GM18951 (cell line): ENCODE measurements at regions of chr10 and their contacts with region 1.

Region 1: DNA sequence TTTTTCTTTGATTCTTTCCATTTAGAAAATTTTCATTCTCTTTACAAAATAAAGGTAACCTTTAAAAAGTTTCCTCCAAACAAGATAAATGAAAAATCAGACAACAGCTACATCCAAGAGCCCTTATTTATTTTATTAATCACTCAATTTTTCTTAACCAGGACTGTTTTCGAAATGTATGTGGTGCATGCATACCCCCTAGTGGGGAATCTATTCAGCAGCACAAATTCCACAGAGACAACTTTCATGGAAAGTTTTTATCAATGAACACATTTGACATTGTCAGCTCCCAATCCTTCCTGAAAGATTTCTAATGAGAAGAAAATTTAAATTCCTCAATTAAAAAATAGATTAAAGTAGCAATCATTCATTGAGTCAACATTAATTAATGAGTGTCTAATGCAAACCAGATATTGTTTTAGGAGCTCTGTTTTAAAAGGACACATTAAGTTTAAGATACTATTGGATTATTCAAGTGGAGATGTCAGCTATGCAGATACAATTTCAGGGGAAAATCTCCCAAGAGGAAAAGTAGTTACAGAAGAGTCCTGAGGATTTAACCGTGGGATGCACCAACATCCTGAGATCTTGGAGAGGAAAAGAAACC is 5.2 kb upstream of the HTR7 start:
- POLR2A ChIP-seq: no peak

Region 2: DNA sequence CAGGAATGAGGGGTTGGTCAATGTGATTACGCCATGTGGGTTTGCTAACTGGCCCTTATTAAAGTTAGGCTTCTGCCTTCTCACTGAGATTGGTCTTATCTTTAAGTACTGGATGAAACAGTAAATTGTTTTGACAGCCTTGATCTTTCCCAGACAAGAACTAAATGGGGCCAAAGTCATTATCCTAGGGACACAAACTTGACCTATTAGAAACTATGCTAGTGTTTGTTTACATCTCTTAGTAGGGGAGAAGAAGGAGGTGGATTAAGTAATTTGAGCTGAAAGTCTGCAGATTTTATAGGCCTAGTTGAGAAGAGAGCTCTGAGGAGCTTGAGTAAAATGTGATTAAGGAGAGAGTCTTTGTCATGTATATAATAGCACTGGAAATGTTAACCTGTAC is 392.0 kb before region 1 on chr10:
- in situ Hi-C with region 1: no loop called
- POLR2A ChIP-seq: no peak

Region 3: GRCh38 chr10:90769946-90770841 is 92.8 kb before region 1 on chr10:
- in situ Hi-C with region 1: loop called (anchors 10 kb)
- POLR2A ChIP-seq: no peak